Stomach (tissue), 19 donors: ENCODE measurements at regions of chr17 and their contacts with region 1.

Region 1: DNA sequence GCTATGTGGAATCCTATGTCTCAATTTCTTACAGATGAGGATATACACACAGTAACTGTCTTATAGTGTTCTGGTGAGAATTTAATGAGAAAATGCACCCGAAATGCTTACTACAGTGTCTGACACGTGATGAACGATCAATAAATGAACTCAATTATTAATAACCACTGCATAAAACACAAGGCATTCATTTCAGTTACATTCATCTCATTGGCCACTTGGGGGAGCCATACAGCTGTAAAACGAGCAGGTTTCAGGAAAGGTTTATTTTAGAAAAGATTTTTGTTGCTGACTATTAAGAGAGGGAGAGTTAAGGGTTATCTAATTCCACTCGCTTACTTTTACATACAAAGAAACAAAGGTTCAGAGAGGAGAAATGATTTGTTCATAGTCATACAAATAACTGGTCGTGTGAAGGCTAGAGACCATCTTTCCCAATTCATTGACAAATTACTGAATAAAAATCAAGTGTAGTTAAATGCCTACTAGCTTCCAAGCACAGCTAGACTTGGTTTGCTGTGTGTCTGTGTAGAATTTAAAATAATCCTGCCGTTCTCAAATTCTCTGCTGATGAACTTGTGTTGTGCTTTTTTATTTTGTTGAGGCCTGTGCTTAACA is 160.1 kb downstream of the MAP2K4 start:
- DNase-seq: peak in 1 of 2 donors; percentile 86
- H3K4me3 ChIP-seq: no peak overlapping the region
- H3K27ac ChIP-seq: peak overlapping the region in 1 of 5 donors; percentile 16
- H3K4me1 ChIP-seq: peaks cover 0 to 13% (median 2%) of the 10 kb centered on the region in 4 donors
- H3K27me3 ChIP-seq: no peaks in the 10 kb centered on the region
- CTCF ChIP-seq: peak in 5 of 7 experiments; percentile 48 to 80 (median 58)
- EP300 ChIP-seq: no peak
- POLR2A ChIP-seq: no peak

Region 2: DNA sequence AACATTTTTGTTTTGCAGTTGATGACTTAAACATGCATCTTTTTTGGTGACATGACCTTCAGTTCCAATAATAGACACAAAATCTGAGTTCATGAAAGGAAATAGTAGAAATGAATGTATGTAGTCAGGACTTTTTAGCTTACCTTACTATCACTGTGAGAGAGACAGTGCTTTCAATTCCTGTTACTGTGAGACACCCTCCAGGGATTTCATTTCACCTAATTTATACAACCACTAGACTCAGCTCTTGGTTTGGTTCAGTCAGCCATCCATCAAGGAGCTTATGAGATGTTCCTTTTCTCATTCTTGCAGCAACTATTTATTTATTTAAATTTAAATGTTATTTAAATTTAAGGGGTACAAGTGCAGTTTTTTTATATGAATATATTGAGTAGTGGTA is 82.2 kb before region 1 on chr17:
- intact Hi-C with region 1: no loop called
- DNase-seq: no peak
- H3K4me3 ChIP-seq: no peak overlapping the region
- H3K27ac ChIP-seq: no peak overlapping the region
- H3K4me1 ChIP-seq: peaks cover 0 to 15% (median under 1%) of the 10 kb centered on the region in 4 donors
- H3K27me3 ChIP-seq: no peaks in the 10 kb centered on the region
- CTCF ChIP-seq: no peak
- EP300 ChIP-seq: no peak
- POLR2A ChIP-seq: no peak

Region 3: GRCh38 chr17:12118617-12119016 is 62.1 kb before region 1 on chr17:
- intact Hi-C with region 1: no loop called
- DNase-seq: no peak
- H3K4me3 ChIP-seq: no peak overlapping the region
- H3K27ac ChIP-seq: no peak overlapping the region
- H3K4me1 ChIP-seq: peaks cover 0 to 5% (median 2%) of the 10 kb centered on the region in 4 donors
- H3K27me3 ChIP-seq: no peaks in the 10 kb centered on the region
- CTCF ChIP-seq: no peak
- EP300 ChIP-seq: no peak
- POLR2A ChIP-seq: no peak

Region 4: GRCh38 chr17:13024526-13025257 is 843.9 kb after region 1 on chr17:
- intact Hi-C with region 1: loop called (anchors 10 kb)
- DNase-seq: peak; percentile 73 to 87
- H3K4me3 ChIP-seq: peak overlapping the region in 1 of 4 donors; percentile 11
- H3K27ac ChIP-seq: no peak overlapping the region
- H3K4me1 ChIP-seq: peaks cover 0 to 8% (median 7%) of the 10 kb centered on the region in 4 donors
- H3K27me3 ChIP-seq: no peaks in the 10 kb centered on the region
- CTCF ChIP-seq: peak in 5 of 7 experiments; percentile 45 to 94 (median 88)
- EP300 ChIP-seq: no peak
- POLR2A ChIP-seq: no peak